HEK293T (cell line): ENCODE measurements at regions of chr17 and their contacts with region 1.

Region 1: DNA sequence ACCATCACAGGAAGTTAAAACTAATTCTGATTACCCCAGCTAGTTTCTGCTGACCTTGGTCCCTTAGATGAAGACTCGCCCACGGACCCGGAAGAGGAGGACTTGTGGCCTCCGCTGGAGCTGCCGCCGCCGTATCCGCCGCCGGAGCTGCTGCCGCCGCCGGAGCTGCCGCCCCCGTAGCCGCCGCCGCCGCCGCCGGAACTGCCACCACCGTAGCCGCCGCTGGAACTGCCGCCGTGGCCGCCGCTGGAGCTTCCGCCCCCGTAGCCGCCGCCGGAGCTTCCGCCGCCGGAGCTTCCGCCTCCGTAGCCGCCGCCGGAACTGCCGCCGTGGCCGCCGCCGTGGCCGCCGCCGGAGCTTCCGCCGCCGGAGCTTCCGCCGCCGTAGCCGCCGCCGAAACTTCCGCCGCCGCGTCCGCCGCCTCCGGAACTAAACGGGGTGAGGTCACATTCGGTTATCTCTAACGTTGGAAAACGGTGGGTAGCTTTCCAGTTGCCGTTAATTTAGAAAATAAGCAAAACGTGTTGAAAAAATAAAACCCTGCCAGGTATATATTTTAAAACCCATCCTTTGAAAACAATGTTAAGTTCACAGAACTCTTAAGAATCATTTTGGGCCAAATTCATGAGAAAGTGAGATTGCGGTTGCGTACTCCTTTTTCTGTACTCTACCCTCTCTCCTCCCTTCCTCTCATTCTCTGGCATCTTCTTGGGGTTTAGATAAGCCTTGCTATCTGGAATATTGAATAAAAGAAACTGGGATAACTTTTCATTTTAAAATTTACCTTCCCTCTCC is 3.5 kb downstream of the KRT10 start:
- DNase-seq: peak; percentile 62

Region 2: GRCh38 chr17:40857535-40857934 is 38.6 kb after region 1 on chr17:
- CTCF ChIA-PET with region 1: no interaction called
- POLR2A ChIA-PET with region 1: interaction called, 10 read pairs
- DNase-seq: no peak

Region 3: DNA sequence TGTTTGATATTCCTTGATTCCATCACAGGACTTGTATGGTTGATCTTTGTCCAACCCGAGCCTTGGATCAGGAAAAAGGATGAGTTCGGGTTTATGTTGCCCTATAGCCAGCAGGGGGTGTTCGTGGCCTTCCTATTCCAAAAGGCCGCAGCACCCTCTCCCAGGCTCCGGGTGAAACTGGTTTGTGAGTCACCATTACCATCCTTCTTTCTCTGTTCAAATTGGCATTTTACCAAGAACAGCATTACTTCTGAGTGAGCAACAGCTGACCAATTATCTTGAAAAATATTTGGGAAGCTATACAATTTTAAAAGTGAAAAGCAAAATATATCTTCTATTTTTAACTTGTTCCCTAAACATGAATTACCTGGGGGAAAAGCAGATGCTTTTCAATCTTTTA is 90.4 kb after region 1 on chr17:
- CTCF ChIA-PET with region 1: no interaction called
- POLR2A ChIA-PET with region 1: no interaction called
- DNase-seq: peak; percentile 62